CD8-positive, alpha-beta T cell (primary cell): ENCODE measurements at regions of chr19 and their contacts with region 1.

Region 1: DNA sequence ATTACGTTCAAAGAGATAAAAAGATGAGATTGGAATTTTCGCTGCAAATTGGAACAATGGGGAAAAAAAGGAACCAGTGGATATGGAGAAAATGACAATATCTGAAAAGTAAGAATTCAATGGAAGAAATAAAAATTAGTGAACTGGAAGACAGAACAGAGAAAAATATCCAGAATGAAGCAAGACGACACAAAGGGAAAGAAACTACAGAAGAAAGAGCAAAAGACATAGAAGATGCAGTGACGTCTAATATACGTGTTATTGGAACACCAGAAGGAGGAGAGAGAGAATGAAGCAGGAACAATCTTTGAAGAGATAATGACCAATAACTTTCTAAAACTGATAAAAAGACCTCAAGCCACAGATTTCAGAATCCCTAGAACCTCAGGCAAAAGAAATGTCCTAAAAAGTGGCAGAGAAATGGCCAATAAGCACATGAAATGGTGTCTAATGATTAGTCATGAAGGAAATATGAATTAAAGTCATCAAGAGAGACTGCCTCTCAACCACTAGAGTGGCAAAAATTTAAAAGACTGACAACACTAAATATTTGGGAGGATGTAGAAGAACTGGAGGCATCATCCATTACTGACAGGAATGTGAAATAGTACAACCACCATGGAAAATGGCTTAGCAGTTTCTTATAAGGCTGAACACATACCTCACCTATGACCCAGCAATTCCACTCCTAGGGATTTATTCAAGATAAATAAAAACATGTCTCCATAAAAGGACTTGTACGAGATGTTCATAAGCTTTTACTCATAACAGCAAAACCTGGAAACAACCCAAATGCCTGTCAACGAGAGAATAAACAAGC is 56.5 kb downstream of the GADD45B start:
- DNase-seq: no peak
- ATAC-seq: no peak
- H3K4me3 ChIP-seq: no peak overlapping the region
- H3K4me3 Mint-ChIP-seq: no peak overlapping the region
- H3K27ac ChIP-seq: no peak overlapping the region
- H3K27ac Mint-ChIP-seq: no peak overlapping the region
- H3K4me1 ChIP-seq: peaks cover 12% of the 10 kb centered on the region
- H3K4me1 Mint-ChIP-seq: peaks cover 19% of the 10 kb centered on the region
- H3K27me3 ChIP-seq: no peaks in the 10 kb centered on the region
- H3K27me3 Mint-ChIP-seq: no peaks in the 10 kb centered on the region
- CTCF ChIP-seq: no peak

Region 2: DNA sequence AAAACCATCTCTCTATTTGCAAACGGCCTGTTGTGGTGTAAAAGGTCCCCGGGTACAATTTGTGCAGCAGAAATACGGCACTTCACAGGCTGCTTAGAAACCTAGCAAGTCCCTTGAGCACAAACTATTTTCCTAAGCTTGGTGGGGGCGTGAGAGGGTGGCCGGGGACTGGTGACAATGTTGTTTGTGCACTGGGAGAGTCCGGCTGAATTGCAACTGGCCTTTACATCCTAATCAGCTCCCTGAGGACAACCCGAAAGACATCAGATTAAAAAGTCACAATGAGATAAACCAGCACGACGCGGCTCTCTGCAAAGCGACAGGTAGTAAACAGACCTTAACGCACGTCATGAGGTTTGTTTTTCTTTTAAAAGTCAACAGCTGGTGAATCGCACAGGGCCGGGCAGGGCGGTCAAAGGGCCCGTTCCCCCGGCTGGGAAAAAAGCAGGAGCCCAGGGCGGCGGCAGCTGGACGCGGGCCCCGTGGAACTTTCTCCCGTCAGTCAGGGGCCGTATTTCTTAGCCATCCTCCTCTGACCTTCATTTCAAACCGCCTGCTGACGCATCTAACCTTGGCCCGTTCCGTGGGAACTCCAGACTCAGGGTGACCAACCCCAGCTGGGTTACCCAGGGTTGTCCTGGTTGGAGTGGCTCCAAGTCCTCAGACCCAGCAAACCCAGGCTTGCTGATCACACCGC is 55.8 kb after region 1 on chr19:
- CTCF ChIA-PET with region 1: no interaction called
- POLR2A ChIA-PET with region 1: no interaction called
- intact Hi-C with region 1: loop called in 1 of 2 experiments (anchors 5 kb)
- DNase-seq: no peak
- ATAC-seq: no peak
- H3K4me3 ChIP-seq: no peak overlapping the region
- H3K4me3 Mint-ChIP-seq: no peak overlapping the region
- H3K27ac ChIP-seq: no peak overlapping the region
- H3K27ac Mint-ChIP-seq: no peak overlapping the region
- H3K4me1 ChIP-seq: no peaks in the 10 kb centered on the region
- H3K4me1 Mint-ChIP-seq: no peaks in the 10 kb centered on the region
- H3K27me3 ChIP-seq: peaks cover 0 to 3% of the 10 kb centered on the region in 2 experiments
- H3K27me3 Mint-ChIP-seq: no peaks in the 10 kb centered on the region
- CTCF ChIP-seq: no peak